Activated CD8-positive, alpha-beta T cell treated with anti-CD3 and anti-CD28 coated beads, Interleukin-2, amount 10 ng/mL, durations not matched to agents 7 days and 5 days (primary cell): ENCODE measurements at regions of chr4 and their contacts with region 1.

Region 1: DNA sequence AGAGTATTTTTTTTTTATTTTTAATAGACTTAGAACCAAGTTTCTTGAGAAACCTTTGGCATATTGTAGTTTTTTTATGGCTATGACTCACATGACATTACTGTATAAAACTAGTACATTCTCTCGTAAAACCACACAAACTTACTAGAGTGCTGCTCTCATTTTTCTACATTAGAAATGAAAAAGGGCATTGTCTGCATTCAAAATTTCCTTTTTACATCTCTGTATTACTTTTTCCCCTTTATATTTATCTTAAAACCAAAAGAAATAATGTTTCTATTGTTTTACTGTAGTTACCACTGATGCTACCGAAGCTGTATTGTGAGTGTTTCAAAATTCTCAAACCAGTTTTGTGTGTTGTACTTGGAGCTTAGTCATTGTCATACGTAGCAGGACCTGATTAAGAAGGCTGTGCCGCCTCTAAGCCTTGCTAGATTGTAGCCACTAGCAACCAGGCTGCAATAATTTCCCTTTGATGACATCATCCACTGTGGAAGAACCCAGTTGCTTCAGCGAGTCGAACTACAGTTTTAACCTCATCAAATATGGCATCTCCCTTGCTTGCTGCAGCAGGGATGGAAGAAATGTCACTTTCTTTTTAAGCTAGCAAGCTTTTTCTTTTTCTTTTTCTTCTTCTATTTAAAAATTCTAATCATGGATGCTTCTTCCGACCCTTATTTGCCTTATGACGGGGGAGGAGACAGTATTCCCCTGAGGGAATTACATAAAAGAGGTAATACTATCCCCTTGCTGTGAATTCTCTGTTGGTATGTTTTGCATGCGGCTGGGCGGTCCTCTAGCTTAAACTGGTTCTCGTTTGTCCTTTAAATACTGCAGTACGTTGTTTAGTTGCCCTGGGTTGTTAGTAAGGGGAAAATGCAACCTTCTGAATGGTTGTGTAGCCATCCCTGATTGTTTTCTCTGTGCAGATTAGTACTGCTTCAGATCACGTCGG is 39.6 kb downstream of the CLCN3 start:
- DNase-seq: peak; percentile 84
- ATAC-seq: peak; percentile 99
- H3K4me3 Mint-ChIP-seq: peak overlapping the region; percentile 73
- H3K27ac Mint-ChIP-seq: peak overlapping the region; percentile 86
- H3K4me1 Mint-ChIP-seq: peaks cover 18% of the 10 kb centered on the region
- H3K27me3 Mint-ChIP-seq: no peaks in the 10 kb centered on the region

Region 2: GRCh38 chr4:169612871-169613859 is 46.8 kb before region 1 on chr4:
- CTCF ChIA-PET with region 1: interaction called, 40 read pairs
- POLR2A ChIA-PET with region 1: interaction called, 20 read pairs
- DNase-seq: peak; percentile 81
- ATAC-seq: peak; percentile 31
- H3K4me3 Mint-ChIP-seq: peak overlapping the region; percentile 97
- H3K27ac Mint-ChIP-seq: peak overlapping the region; percentile 99
- H3K4me1 Mint-ChIP-seq: peaks cover 50% of the 10 kb centered on the region
- H3K27me3 Mint-ChIP-seq: no peaks in the 10 kb centered on the region

Region 3: GRCh38 chr4:169619959-169620879 is 39.8 kb before region 1 on chr4 and contains the start of gene CLCN3:
- CTCF ChIA-PET with region 1: interaction called, 13 read pairs
- POLR2A ChIA-PET with region 1: interaction called, 25 read pairs
- DNase-seq: peak; percentile 92
- ATAC-seq: peak; percentile 90
- H3K4me3 Mint-ChIP-seq: peak within 1 kb of the TSS; percentile 96
- H3K27ac Mint-ChIP-seq: peak within 1 kb of the TSS; percentile 99
- H3K4me1 Mint-ChIP-seq: peaks cover 53% of the 10 kb centered on the region
- H3K27me3 Mint-ChIP-seq: no peaks in the 10 kb centered on the region
- total RNA-seq, gene CLCN3: 23.4 to 25.2 TPM

Region 4: DNA sequence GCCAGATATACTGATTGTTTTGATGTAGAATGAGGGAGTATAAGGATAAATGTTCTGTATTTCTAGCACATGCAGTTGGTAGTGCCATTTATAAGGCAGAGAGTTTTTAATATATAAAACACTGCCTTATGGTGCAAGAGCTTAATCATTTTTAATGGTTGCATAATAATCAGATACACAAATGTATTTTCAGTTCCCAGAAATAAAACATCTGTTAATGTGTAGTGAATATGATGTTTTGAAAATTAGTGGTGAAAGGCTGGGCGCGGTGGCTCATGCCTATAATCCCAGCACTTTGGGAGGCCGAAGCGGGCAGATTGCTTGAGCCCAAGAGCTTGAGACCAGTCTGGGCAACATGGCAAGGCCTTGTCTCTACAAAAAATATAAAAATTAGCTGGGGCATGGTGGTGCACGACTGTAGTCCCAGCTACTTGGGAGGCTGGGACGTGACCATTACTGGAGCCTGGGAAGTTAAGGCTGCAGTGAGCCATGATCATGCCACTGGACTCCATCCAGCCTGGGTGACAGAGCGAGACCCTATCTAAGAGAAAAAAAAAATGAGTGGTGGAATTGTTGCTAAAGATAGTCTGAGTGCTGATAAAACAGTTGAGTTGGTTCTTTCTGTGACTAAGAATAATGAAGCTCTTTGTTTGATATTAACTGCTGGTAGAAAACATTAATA is 10.3 kb before region 1 on chr4:
- CTCF ChIA-PET with region 1: interaction called, 11 read pairs
- POLR2A ChIA-PET with region 1: interaction called, 3 read pairs
- DNase-seq: no peak
- ATAC-seq: no peak
- H3K4me3 Mint-ChIP-seq: no peak overlapping the region
- H3K27ac Mint-ChIP-seq: no peak overlapping the region
- H3K4me1 Mint-ChIP-seq: peaks cover 2% of the 10 kb centered on the region
- H3K27me3 Mint-ChIP-seq: no peaks in the 10 kb centered on the region